Panc1 (cell line): ENCODE measurements at regions of chr1 and their contacts with region 1.

Region 1: DNA sequence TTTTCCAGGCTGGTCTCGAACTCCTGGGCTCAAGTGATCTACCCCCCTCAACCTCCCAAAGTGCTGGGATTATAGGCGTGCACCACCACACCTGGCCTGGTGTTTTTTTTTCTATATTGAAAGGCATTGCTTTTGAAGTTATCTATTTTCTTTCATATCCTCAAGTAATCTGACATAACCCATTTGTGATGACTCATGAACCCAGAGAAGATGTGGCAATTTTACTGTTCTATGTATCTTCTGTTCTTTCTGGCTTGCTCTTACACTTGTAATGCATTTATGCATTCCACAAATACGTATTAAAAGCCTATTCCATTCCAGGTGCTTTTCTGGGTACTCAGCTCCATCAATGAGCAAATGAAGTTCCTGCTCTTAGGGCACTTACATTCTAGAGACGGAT is 29.9 kb upstream of the ERRFI1 start:
- DNase-seq: no peak
- ATAC-seq: 0 out of 2 replicates have a peak, but pooled peaks have one; percentile 38
- H3K4me3 ChIP-seq: no peak overlapping the region
- H3K27ac ChIP-seq: peak overlapping the region; percentile 99
- H3K4me1 ChIP-seq: peaks cover 49% of the 10 kb centered on the region
- H3K27me3 ChIP-seq: no peaks in the 10 kb centered on the region
- CTCF ChIP-seq: no peak

Region 2: DNA sequence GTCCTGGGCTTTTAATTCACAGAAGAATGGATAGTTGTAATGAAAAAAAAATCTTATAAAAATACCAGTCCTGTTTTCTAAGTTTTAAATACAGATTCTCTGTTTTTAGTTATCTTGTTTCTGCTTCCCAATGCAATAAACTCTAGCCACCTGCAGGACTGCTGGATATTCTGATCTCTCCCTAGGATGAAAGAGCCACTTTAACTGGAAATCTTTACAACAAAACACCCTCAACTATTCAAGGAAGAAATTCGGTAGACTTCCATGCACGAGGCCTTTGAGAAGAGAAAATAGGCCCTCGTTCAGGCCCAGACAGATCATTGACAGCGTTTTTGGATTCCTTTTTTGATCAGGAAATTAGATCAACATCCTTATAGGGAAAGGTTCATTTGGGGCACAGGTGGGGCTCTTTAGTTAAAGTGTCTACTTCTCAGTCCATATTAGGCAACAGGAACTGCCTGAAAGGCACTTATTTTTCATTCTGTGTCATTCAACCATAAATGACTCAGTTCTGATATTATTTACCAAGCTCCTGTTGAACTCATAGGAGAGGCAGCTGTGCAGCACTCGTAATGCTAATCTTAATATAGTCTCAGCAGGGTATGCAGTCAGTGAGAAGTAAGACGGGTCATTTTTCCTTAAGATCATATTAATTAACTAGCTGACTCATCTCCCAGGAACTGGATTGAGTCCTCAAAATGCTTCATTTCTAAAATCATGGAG is 41.3 kb after region 1 on chr1:
- CTCF ChIA-PET with region 1: interaction called, 4 read pairs
- POLR2A ChIA-PET with region 1: interaction called, 14 read pairs
- in situ Hi-C with region 1: no loop called
- intact Hi-C with region 1: no loop called
- DNase-seq: peak; percentile 97
- ATAC-seq: peak; percentile 96
- H3K4me3 ChIP-seq: no peak overlapping the region
- H3K27ac ChIP-seq: peak overlapping the region; percentile 100
- H3K4me1 ChIP-seq: peaks cover 56% of the 10 kb centered on the region
- H3K27me3 ChIP-seq: no peaks in the 10 kb centered on the region
- CTCF ChIP-seq: no peak

Region 3: DNA sequence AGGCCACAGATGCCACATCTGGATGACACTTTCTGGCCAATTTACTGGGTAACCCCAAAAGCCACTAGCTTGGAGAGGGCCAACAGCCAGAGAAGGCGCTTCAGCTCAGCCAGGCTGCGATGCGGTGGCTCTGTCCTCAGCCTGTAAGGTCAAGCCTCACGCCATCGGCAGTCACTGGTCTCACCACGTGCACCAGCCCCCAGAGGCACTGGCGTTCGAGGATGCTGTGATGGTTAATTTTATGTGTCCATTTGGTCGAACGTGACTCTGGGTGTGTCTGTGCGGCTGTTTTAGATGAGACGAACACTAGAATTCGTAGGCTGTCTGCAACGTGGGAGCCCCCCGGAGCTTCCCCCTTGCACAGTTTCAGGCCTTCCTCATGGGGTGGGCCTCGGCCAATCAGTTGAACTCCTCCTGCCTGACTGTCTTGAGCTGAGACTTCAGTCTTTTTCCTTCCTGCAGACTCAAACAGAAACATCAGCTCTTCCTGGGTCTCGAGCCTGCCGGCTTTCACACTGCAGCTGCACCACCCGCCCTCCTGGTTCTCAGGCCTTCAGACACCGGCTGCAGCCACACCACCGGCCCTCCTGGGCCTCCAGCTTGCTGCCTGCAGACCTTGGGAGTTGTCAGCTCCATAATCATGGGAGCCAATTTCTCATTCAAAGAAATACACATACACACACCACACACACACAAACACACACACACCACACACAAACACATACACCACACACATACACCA is 220.4 kb after region 1 on chr1:
- CTCF ChIA-PET with region 1: no interaction called
- POLR2A ChIA-PET with region 1: interaction called, 10 read pairs
- in situ Hi-C with region 1: no loop called
- intact Hi-C with region 1: no loop called
- DNase-seq: no peak
- ATAC-seq: peak; percentile 81
- H3K4me3 ChIP-seq: no peak overlapping the region
- H3K27ac ChIP-seq: peak overlapping the region; percentile 62
- H3K4me1 ChIP-seq: peaks cover 7% of the 10 kb centered on the region
- H3K27me3 ChIP-seq: no peaks in the 10 kb centered on the region
- CTCF ChIP-seq: no peak